ENCODE measurements at regions of chr6 and their contacts with region 1.

Region 1: GRCh38 chr6:111709615-111710398 is 104.1 kb upstream of the TRAF3IP2 start:
- H3K4me3 Mint-ChIP-seq: no peak overlapping the region
- H3K27ac Mint-ChIP-seq: no peak overlapping the region
- H3K4me1 Mint-ChIP-seq: no peaks in the 10 kb centered on the region
- H3K27me3 Mint-ChIP-seq: no peaks in the 10 kb centered on the region

Region 2: GRCh38 chr6:111534231-111534751 is 175.5 kb before region 1 on chr6:
- intact Hi-C with region 1: no loop called
- H3K4me3 Mint-ChIP-seq: no peak overlapping the region
- H3K27ac Mint-ChIP-seq: no peak overlapping the region
- H3K4me1 Mint-ChIP-seq: peaks cover 27% of the 10 kb centered on the region
- H3K27me3 Mint-ChIP-seq: no peaks in the 10 kb centered on the region

Region 3: DNA sequence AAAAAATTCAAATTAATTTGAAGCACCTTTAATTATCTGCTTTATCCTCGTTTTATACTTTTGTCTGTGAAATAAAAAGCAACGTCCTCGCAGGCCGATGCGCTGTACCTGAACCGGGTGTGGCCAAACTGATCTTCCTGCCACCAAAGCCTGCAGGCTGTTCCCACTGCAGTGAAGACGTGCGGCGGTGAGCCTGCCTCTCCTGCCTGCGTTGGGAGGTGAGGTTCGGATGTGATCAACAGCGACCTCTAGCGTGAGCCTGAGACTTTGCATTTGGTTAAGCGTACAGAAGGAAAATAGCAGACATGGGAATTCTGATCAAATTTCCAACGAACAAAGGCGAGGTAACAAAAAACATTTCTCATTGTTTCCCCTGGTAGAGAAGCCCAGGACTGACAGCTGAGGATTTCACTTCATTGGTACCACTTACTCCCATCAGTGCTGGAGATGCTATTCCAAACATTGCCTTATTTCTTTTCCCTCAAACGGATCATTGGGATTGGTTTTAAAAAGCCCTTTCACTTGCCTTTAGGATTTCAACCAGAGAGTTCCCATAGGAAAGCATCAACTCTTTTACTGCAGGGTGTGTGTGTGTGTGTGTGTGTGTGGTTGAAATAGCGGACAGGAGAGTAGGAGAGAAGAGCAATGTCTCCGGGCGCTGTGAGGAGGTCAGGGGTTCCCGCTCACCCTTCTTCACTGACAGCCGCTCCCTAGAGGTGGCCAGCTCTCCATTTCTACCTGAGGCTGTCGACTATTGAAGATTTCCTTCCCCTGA is 287.5 kb after region 1 on chr6:
- intact Hi-C with region 1: loop called (anchors 1 kb)
- H3K4me3 Mint-ChIP-seq: no peak overlapping the region
- H3K27ac Mint-ChIP-seq: no peak overlapping the region
- H3K4me1 Mint-ChIP-seq: peaks cover 27% of the 10 kb centered on the region
- H3K27me3 Mint-ChIP-seq: peaks cover 2% of the 10 kb centered on the region

Region 4: DNA sequence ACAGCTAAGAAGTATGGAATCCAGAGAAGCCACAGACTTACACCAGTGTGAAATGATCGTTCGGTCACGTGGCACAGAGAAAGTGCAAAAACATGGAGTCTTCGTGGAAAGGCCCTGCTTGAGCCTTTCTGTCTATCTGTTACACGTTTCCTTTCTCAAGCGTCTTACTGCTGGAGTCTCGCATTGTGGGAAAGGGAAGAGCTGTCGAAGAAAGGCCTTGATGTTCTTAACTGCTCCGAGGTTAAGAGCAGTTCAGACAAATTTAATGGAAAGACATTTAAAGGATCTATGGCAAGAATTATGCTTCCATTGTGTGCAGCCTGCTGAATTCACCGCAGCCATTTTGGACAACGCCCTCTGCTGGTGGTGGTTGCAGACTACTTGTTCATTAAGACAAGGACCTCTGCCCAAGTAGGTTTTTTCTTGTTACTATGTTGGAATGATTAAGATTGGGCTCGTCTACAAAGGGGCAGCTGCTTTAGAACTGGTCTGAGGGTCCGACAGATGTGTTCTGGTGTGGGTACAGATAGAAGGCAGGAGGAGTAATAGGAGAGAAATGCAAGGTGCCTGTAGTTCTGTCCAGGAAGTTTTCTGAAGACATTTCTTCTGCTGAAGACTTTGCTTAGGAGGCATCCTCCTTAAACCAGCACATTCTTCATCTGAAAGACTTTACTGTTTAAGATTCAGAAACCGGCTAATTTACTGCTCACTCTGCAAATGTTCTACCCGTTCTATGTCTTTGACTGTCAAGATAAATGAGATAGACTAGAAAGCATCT is 319.4 kb after region 1 on chr6:
- intact Hi-C with region 1: loop called (anchors 1 kb)
- H3K4me3 Mint-ChIP-seq: no peak overlapping the region
- H3K27ac Mint-ChIP-seq: no peak overlapping the region
- H3K4me1 Mint-ChIP-seq: no peaks in the 10 kb centered on the region
- H3K27me3 Mint-ChIP-seq: peaks cover 9% of the 10 kb centered on the region

Region 5: DNA sequence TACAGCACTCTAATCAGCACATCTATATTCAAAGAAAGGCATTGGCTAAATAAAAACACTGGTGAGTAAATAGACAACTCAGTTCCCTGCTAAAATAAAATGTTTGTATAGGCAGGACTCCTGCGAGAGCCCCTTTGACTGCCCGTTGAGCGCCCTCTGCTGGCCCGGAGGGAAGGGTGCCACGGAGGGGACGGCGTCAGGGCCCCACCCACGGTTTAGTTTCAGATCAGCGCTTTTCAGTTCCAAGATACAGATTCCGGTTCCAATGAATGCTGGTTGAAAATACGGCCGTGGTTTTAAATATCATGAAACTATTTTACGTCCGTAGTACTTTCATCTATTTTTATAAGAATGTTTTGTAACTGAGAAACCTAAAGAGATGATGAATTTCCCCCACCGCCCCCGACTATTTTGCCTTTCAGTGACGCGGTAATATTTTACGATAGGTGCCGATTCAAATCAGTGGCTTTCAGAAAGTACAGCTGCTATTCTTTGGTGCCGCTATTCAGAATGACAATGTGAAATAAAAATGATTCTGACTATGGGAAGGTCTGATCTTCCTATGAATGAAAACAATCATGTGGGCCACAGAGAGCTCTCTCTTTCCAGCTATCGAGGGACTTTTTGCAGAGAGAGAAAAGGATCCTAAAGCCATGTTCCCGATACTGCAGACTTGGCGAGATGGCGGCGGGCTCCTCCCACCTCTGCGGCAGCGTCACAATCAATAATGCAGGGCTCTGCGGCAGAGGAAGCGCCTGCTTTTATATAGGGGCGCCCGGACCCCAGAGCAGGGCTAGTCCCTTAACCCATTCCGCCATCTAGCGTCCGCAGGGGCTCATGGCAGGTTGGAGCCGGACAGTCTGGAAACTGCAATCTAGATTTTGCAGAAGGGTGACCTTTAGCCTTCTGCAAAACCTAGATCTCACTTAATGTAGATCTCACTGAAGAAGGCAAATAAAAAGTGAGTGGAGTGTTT is 333.5 kb after region 1 on chr6:
- intact Hi-C with region 1: loop called (anchors 1 kb)
- H3K4me3 Mint-ChIP-seq: peak overlapping the region; percentile 76
- H3K27ac Mint-ChIP-seq: peak overlapping the region; percentile 92
- H3K4me1 Mint-ChIP-seq: peaks cover 10% of the 10 kb centered on the region
- H3K27me3 Mint-ChIP-seq: no peaks in the 10 kb centered on the region

Region 6: DNA sequence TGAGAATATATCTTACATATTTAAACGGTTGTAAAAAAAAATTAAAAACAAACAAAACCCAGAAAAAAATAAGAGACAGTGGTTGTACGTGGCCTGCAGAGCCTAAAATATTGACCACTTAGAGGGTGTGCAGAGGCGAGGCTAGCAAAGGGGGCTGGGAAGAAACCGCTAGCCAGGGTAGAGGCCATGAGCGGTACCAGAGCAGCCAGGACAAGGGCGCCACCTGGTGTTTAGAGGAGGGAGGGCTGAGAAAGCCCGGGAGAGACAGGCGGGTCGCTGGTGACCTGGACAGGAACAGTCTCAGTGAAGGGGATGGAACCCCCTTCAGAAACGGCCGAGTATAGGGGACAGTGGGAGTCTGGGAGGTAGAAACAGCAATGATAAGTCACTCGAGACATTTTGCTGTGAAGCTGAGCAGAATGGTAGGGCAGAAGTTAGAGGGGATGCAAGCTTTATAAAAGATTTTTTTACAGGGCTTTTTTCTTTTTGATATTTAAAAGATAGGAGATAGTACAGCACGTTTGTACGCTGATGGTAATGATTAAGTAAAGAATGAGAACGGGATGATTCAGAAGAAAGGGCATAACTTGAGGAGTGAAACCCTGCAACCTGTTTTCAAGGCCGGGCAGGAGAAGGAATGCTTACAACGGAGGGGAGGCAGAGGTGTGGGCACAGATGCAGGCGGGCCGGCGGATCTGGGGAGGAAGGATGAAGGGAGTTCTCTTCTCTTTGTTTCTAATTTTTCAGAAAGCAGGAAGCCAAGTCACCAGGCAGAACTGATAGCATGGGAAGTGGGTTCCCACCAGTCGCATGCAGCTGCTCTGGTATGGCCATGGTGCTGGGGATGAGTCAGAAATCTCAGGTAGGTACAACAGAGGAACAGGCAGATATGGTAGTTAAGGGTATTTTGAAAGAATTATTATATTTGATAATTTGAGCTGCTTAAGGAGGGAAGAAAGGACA is 453.8 kb after region 1 on chr6:
- intact Hi-C with region 1: loop called (anchors 1 kb)
- H3K4me3 Mint-ChIP-seq: no peak overlapping the region
- H3K27ac Mint-ChIP-seq: no peak overlapping the region
- H3K4me1 Mint-ChIP-seq: peaks cover 6% of the 10 kb centered on the region
- H3K27me3 Mint-ChIP-seq: peaks cover 27% of the 10 kb centered on the region

Region 7: GRCh38 chr6:112311950-112312547 is 602.2 kb after region 1 on chr6:
- intact Hi-C with region 1: loop called (anchors 10 kb)
- H3K4me3 Mint-ChIP-seq: no peak overlapping the region
- H3K27ac Mint-ChIP-seq: no peak overlapping the region
- H3K4me1 Mint-ChIP-seq: peaks cover 5% of the 10 kb centered on the region
- H3K27me3 Mint-ChIP-seq: no peaks in the 10 kb centered on the region

Measured in dendritic cell treated with granulocyte-macrophage colony-stimulating factor and Interleukin-4, amounts not matched to agents 40 ng/mL and 50 ng/mL, for 4 days (primary cell).